ENCODE measurements at regions of chr17 and their contacts with region 1.

Region 1: DNA sequence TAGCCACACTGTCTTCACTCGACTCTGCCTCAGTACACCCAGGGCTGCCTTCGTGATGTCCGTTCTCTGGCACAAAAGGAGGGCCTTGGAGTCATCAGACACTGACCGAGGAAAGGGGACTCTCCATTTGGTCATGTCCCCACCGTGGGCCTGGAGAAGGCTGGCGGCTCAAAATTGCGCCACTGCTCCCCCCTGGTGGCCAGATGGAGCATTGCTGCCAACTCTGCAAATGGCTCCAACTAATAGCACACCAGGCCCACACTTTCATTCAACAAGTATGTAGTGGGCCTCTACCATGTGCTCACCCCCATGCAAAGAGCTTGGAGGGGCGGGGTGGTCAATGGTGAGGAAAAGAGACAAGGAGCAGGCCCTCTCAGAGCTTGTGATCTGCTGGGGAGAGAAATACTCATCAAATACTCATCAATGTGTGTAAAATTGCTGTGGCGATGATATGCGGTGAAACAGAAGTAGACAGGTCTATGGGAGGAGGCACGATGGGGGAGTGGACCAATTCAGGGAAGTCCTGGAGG is 5.2 kb upstream of the GRIN2C start:
- DNase-seq: peak; percentile 89

Region 2: GRCh38 chr17:74790161-74791054 is 74.5 kb before region 1 on chr17:
- intact Hi-C with region 1: loop called (anchors 1 kb)
- DNase-seq: no peak

Region 3: DNA sequence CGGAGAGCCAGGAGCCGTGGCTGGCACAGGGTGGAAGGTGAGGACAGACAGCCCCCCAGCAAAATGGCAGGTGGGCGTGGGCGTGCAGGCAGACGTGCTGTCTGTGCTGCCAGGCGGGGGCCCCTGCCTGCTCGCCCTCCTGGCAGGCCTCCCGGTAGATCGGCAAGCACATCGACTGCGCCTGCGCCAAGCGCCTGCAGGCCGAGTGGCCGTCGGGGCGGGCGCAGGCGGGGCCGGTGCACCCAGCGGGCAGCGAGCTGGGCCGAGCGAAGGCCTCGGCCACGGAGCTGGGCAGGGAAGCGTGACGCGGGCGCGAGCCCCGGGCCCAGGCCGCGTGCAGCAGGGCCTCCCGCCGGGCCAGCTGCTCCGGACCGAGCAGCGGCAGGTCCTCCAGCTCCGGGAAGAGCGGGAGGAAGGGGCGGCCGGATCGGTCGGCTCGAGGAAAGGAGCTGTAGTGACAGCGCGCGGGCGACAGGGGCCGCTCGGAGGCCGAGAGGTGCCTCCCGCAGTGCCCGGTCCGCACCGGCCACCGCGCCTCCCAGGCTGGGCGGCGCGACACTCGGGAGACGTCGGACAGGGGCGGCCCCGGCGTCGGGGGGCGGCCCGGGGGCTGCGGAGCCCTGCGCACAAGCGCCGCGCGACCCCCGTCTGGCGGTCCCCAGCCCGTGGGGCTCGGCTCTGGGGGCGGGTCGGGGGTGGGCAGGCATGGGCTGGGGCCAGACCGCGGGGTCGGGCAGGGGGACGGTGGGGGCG is 22.2 kb before region 1 on chr17:
- intact Hi-C with region 1: loop called (anchors 2 kb)
- DNase-seq: peak; percentile 82

Region 4: DNA sequence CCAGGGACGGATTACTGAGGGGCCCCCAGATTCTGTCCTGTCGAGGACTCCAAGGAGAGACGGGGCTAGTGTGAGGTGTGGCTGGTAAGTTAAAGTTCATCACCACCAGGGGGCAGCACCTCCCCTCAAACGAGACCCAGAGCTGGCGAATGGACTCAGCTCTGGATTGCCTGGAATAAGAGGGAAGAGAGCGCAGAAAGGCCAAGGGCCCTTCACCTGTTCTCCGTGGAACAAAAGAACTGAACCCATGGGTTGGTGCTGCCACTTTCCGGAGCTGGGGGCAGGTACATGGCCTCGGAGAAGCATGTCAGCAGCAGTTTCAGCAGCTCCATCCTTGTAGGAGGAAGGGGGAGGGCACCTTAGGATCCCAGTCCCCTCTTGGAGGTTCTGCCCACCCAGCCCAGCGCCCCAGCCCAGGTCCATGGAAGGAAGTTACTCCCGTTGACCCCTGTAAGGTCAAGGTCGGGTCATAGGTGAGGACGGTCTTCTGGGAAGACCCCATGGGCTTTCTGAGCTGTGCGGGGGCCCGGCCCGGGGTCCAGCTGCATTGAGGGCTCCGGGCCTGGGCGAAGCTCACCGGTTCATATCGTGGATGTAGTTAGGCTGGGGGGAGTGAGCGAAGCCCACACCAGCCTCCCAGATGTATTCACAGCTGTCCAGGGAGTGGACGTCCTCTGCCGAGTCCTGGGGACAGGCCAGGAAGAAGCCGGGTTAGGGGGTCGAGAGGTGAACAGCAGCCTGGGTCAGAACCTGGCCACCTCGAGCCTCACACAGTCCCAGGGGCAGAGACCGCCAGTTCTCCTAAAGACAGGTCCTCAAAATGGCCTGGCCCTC is 96.9 kb after region 1 on chr17:
- intact Hi-C with region 1: no loop called
- DNase-seq: peak; percentile 90

Measured in cardiac septum (tissue), 1 donor.